Activated CD8-positive, alpha-beta T cell treated with anti-CD3 and anti-CD28 coated beads for 36 hours (primary cell): ENCODE measurements at regions of chr11 and their contacts with region 1.

Region 1: GRCh38 chr11:102341844-102342318 is 5.1 kb upstream of the BIRC2 start:
- DNase-seq: peak; percentile 87
- ATAC-seq: peak; percentile 63
- H3K4me3 Mint-ChIP-seq: no peak overlapping the region
- H3K27ac Mint-ChIP-seq: no peak overlapping the region
- H3K4me1 Mint-ChIP-seq: peaks cover 23% of the 10 kb centered on the region
- H3K27me3 Mint-ChIP-seq: no peaks in the 10 kb centered on the region
- CTCF ChIP-seq: peak; percentile 78

Region 2: DNA sequence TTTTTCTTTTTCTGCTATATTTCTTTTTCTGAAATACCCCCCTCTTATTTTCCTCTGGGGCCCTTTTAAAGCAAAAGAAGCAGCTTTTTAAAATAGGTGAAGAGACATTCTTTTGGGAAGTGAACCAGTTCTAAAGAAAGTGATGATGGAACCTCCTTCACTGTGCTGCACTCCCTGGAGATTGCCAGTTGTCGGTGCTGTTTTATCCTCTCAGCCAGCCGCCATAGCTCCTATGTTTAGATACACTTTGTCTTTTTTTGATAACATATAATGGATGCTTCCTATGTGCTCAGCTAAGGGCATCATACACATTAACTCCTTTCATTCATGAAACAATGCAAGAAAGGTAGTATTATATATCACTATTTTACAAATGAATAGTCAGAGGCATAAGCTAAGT is 280.6 kb before region 1 on chr11:
- CTCF ChIA-PET with region 1: no interaction called
- POLR2A ChIA-PET with region 1: no interaction called
- intact Hi-C with region 1: no loop called
- DNase-seq: no peak
- ATAC-seq: no peak
- H3K4me3 Mint-ChIP-seq: no peak overlapping the region
- H3K27ac Mint-ChIP-seq: no peak overlapping the region
- H3K4me1 Mint-ChIP-seq: no peaks in the 10 kb centered on the region
- H3K27me3 Mint-ChIP-seq: peaks cover 15% of the 10 kb centered on the region
- CTCF ChIP-seq: no peak

Region 3: DNA sequence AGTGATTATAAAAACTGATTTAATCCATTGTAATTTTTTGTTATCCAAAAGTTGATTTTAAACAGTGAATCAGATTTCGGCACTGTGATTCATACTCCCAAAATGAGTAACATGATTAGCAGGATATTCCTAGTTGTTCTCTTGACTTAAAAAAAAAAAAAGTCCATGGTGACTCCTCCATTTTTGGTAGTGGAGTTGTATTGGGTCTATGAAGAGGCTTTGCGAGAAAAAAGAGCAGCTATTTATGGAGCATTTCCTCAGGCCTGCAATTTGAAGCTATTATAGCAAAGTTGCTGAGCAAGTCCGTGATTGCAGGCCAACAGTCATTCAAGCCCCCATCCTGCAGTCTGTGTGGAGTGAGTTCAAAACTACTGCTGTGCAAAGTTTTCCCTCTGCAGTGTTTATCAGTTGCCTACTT is 202.8 kb before region 1 on chr11:
- CTCF ChIA-PET with region 1: no interaction called
- POLR2A ChIA-PET with region 1: no interaction called
- intact Hi-C with region 1: no loop called
- DNase-seq: no peak
- ATAC-seq: no peak
- H3K4me3 Mint-ChIP-seq: no peak overlapping the region
- H3K27ac Mint-ChIP-seq: no peak overlapping the region
- H3K4me1 Mint-ChIP-seq: no peaks in the 10 kb centered on the region
- H3K27me3 Mint-ChIP-seq: peaks cover 16% of the 10 kb centered on the region
- CTCF ChIP-seq: no peak

Region 4: DNA sequence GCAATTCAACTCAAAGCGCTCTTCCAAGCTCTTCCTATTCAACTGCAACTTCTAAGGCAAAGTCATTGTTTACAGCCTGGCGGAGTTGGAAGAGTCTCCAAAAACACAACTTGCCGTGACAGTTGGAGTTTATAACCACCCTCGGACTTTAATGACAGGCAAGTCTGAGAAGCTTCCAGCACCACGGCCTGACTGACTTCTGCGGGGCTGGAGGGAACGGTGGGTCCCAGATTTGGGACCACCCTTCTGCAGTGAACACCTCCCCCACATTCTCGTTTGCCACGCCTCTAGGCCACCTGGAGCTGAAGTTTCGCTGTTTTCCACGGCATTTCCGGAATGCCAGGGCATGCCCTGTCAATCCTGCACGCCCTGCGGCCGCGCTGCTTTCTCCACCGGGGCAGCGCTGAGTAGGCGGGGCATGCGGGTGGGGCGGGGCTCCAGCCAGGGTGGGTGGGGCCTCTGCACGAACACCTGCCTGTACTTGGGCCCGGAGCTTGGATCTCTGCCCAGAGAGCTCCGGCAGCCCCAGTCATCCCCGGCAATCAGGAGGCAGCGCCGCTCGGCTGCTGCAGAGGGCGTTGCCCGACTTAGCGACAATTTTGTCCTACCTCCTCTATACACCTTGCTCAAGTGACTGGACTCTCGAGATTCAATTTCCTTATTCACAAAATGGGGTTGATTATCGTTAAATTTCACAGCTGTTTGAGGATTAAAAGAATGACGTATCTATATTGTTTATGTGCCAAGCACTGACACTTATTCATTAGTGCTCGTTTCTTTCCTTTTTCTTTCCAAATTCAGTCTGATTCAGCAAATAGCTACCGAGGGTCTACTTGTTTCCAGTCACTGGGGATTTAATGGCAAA is 73.3 kb before region 1 on chr11:
- CTCF ChIA-PET with region 1: interaction called, 21 read pairs
- POLR2A ChIA-PET with region 1: interaction called, 3 read pairs
- intact Hi-C with region 1: no loop called
- DNase-seq: peak; percentile 87
- ATAC-seq: peak; percentile 99
- H3K4me3 Mint-ChIP-seq: peak overlapping the region; percentile 68
- H3K27ac Mint-ChIP-seq: no peak overlapping the region
- H3K4me1 Mint-ChIP-seq: peaks cover 19% of the 10 kb centered on the region
- H3K27me3 Mint-ChIP-seq: peaks cover 15% of the 10 kb centered on the region
- CTCF ChIP-seq: peak; percentile 66

Region 5: GRCh38 chr11:102323542-102324251 is 18.2 kb before region 1 on chr11:
- CTCF ChIA-PET with region 1: interaction called, 15 read pairs
- POLR2A ChIA-PET with region 1: interaction called, 6 read pairs
- intact Hi-C with region 1: no loop called
- DNase-seq: no peak
- ATAC-seq: no peak
- H3K4me3 Mint-ChIP-seq: no peak overlapping the region
- H3K27ac Mint-ChIP-seq: no peak overlapping the region
- H3K4me1 Mint-ChIP-seq: peaks cover 57% of the 10 kb centered on the region
- H3K27me3 Mint-ChIP-seq: no peaks in the 10 kb centered on the region
- CTCF ChIP-seq: no peak

Region 6: GRCh38 chr11:102384419-102385079 is 42.7 kb after region 1 on chr11:
- CTCF ChIA-PET with region 1: interaction called, 23 read pairs
- POLR2A ChIA-PET with region 1: no interaction called
- intact Hi-C with region 1: no loop called
- DNase-seq: no peak
- ATAC-seq: no peak
- H3K4me3 Mint-ChIP-seq: no peak overlapping the region
- H3K27ac Mint-ChIP-seq: peak overlapping the region; percentile 28
- H3K4me1 Mint-ChIP-seq: peaks cover 41% of the 10 kb centered on the region
- H3K27me3 Mint-ChIP-seq: no peaks in the 10 kb centered on the region
- CTCF ChIP-seq: no peak

Region 7: DNA sequence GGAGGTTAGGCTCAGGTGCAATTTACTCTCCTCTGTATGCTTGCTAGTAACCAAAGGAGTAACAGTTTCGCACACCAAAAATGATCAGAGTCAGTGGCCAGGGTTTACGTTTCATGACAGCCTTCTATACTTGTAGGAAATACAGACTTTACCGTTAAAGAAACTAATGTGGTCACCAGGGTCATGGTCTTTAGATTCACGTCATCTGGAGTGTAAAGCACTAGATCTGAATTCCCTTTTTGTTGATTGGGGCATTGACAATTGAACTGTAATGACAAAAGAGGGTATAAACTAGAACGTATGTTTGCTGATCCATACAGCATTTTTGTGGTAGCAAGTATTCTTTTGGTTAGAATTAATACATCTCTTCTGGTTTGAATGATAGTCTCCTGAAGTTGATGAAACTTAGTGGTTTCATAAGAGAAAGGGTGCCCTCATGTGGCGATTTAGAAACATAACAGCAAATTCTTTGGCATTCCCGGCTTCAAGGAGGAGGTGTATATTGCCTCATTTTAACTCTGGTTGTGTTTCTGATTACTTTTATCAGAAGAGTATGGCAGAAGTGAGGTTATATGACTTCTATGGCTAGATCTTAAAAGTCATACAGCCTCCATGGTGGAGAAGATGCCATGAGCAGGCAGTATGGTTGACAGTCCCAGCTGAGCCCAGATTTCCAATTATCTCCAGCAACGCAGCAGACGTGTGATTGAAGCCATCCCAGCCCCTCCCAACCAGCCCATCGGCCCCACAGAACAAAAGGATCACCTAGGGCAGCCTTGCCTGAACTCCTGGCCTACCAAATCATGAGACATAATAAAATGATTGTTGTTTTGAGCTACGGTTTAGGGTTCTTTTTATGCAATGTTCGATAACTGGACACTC is 153.5 kb after region 1 on chr11:
- CTCF ChIA-PET with region 1: interaction called, 63 read pairs
- POLR2A ChIA-PET with region 1: interaction called, 3 read pairs
- intact Hi-C with region 1: loop called (anchors 1 kb)
- DNase-seq: peak; percentile 51
- ATAC-seq: peak; percentile 68
- H3K4me3 Mint-ChIP-seq: no peak overlapping the region
- H3K27ac Mint-ChIP-seq: peak overlapping the region; percentile 14
- H3K4me1 Mint-ChIP-seq: peaks cover 23% of the 10 kb centered on the region
- H3K27me3 Mint-ChIP-seq: peaks cover 1% of the 10 kb centered on the region
- CTCF ChIP-seq: peak; percentile 92

Region 8: GRCh38 chr11:102608699-102609098 is 266.8 kb after region 1 on chr11:
- CTCF ChIA-PET with region 1: interaction called, 105 read pairs
- POLR2A ChIA-PET with region 1: no interaction called
- intact Hi-C with region 1: loop called (anchors 5 kb)
- DNase-seq: no peak
- ATAC-seq: no peak
- H3K4me3 Mint-ChIP-seq: no peak overlapping the region
- H3K27ac Mint-ChIP-seq: no peak overlapping the region
- H3K4me1 Mint-ChIP-seq: peaks cover 5% of the 10 kb centered on the region
- H3K27me3 Mint-ChIP-seq: no peaks in the 10 kb centered on the region
- CTCF ChIP-seq: no peak